Adrenal gland (tissue), 19 donors: ENCODE measurements at regions of chr14 and their contacts with region 1.

Region 1: DNA sequence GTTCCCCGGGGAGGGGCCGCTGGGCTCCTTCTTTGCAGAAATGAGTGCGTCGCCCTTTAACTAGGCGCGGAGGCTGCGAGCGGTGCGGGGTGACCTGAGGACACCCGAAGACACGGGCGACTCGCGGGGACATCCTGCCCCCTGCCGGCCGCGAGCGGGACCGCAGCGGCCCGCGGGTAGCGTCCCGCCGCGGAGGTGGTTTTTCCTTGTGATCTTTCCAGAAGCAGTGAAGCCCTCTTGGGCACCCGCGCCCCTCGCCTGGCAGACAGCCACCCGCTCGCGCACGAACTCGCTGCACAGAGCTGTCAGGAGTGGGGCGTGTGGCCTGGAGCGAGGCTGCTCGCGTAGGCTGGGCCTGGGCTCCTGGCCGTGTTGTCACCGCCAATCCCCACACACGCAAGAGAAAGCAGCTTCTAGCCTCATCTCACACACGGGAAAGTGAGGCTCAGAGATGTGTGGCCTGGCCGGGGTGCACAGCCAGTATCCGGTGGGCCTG is 67.2 kb downstream of the DIO3 start:
- DNase-seq: peak; percentile 66 to 92 (median 80)
- H3K4me3 ChIP-seq: peak overlapping the region in 1 of 4 donors; percentile 11
- H3K27ac ChIP-seq: peak overlapping the region in 1 of 5 donors; percentile 20
- H3K4me1 ChIP-seq: peaks cover 0 to 5% of the 10 kb centered on the region in 2 donors
- H3K27me3 ChIP-seq: no peaks in the 10 kb centered on the region
- CTCF ChIP-seq: peak; percentile 88 to 100 (median 98)
- POLR2A ChIP-seq: no peak

Region 2: DNA sequence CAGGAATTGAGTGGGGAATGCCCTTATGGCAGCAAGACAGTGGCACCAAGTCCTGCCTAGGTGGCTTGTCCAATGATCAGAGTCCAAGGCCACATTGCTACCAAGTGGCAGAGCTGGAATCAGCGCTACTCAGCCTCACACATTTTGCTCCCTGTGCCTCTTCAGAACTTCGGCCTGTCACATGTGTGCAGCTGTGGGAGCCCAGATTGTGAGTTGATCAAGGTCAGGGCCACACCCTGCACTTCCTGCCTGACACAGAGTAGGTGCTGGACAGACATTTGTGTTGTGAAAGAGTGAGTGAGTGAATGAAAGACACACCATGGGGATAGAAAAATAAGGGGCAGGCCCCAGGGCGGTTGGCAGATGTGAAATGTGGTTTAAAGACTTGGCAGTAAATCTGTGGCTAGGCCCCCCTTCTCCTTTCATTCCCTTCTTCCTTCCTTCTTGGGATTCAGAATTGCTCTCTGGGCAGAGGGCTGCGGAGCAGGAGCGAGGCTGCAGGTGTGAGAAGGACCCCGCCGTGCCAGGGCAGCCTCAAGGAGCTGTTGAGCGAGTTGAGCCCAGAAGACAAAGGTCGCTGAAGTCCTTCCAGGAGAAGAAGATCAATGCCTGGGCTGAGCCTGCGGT is 1221.9 kb before region 1 on chr14:
- intact Hi-C with region 1: loop called in 1 of 2 experiments (anchors 10 kb)
- DNase-seq: peak in 4 of 7 donors; percentile 56 to 70 (median 63)
- H3K4me3 ChIP-seq: no peak overlapping the region
- H3K27ac ChIP-seq: peak overlapping the region in 1 of 5 donors; percentile 38
- H3K4me1 ChIP-seq: peaks cover 0 to 21% of the 10 kb centered on the region in 2 donors
- H3K27me3 ChIP-seq: no peaks in the 10 kb centered on the region
- CTCF ChIP-seq: no peak
- POLR2A ChIP-seq: no peak

Region 3: GRCh38 chr14:100654814-100655740 is 973.4 kb before region 1 on chr14:
- intact Hi-C with region 1: loop called in 1 of 2 experiments (anchors 10 kb)
- DNase-seq: peak in 4 of 7 donors; percentile 60 to 69 (median 66)
- H3K4me3 ChIP-seq: no peak overlapping the region
- H3K27ac ChIP-seq: no peak overlapping the region
- H3K4me1 ChIP-seq: peaks cover 2 to 5% of the 10 kb centered on the region in 2 donors
- H3K27me3 ChIP-seq: no peaks in the 10 kb centered on the region
- CTCF ChIP-seq: peak; percentile 54 to 87 (median 66)
- POLR2A ChIP-seq: no peak

Region 4: DNA sequence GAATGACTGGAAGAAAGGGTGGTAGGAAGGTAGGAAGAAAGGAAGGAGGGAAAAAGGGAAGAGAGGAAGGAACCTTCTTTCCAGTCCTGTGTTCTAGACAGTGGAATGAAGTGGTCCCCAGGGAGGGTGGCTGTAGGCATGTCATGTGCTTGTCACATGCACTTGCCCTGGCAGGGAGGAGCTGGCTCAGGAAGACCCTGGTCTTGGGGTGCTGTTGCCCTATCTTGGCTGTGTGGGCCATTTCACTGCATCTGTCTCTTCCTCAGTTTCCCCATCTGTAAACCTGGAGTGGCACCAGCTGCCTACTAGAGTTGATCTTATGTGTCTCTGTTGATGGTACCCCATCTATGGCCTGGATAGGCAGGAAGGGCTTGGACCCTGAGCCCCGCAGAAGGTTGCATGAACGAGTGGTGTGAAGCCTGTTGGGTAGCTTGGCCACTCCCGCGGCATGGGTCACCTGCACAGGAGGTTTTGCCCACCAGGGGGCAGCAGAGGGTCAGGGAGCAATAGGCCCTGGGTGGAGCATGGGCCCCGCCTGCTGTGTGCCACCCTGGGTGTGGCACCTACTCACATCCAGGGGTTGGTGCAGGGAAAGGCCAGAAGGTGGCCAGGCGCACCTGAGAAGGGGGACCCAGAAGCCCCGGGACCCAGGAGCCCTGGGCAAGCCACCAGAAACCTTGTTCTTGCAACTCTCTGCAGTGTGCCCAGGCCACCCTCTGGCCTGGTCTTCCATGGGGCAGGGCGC is 777.5 kb before region 1 on chr14:
- intact Hi-C with region 1: loop called in 1 of 2 experiments (anchors 5 kb)
- DNase-seq: peak; percentile 69 to 91 (median 81)
- H3K4me3 ChIP-seq: no peak overlapping the region
- H3K27ac ChIP-seq: peak overlapping the region in 3 of 5 donors; percentile 29 to 66 (median 48)
- H3K4me1 ChIP-seq: peaks cover 0 to 31% of the 10 kb centered on the region in 2 donors
- H3K27me3 ChIP-seq: no peaks in the 10 kb centered on the region
- CTCF ChIP-seq: peak; percentile 69 to 92 (median 84)
- POLR2A ChIP-seq: no peak

Region 5: DNA sequence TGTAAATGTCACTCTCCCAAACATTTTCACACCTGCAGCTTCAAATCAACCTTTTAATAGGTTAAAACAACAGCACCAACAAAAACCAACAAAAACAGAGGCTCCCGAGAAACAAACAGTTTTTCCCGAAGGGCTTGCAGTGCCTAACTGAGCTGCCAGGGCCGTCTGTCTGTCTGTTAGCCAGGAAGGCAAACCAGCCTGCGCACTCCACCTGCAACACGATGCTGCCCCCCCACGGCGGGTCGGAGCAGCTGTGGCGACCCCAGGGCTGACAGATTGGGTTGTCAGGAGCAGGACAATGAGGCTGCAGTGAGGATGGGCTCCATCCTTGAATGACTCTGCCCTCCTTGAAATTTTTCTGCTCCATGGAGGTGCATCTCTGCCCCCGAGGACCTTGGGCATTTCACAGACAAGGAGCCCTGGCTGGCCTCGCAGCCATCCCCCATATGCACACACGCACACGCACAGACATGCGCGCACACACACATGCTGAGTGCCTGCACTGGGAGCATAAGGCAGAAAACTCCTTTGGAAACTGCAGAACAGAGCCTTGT is 727.6 kb before region 1 on chr14:
- intact Hi-C with region 1: loop called in 1 of 2 experiments (anchors 10 kb)
- DNase-seq: peak; percentile 79 to 91 (median 84)
- H3K4me3 ChIP-seq: peak overlapping the region in 1 of 4 donors; percentile 18
- H3K27ac ChIP-seq: peak overlapping the region; percentile 29 to 79 (median 56)
- H3K4me1 ChIP-seq: peaks cover 29 to 50% of the 10 kb centered on the region in 2 donors
- H3K27me3 ChIP-seq: no peaks in the 10 kb centered on the region
- CTCF ChIP-seq: peak; percentile 20 to 68 (median 52)
- POLR2A ChIP-seq: peak in 1 of 2 donors; percentile 26

Region 6: GRCh38 chr14:101167428-101167827 is 461.1 kb before region 1 on chr14:
- intact Hi-C with region 1: no loop called
- DNase-seq: no peak
- H3K4me3 ChIP-seq: no peak overlapping the region
- H3K27ac ChIP-seq: no peak overlapping the region
- H3K4me1 ChIP-seq: no peaks in the 10 kb centered on the region
- H3K27me3 ChIP-seq: no peaks in the 10 kb centered on the region
- CTCF ChIP-seq: no peak
- POLR2A ChIP-seq: no peak

Region 7: GRCh38 chr14:101235335-101236103 is 393.0 kb before region 1 on chr14:
- intact Hi-C with region 1: loop called in 1 of 2 experiments (anchors 10 kb)
- DNase-seq: peak; percentile 50 to 87 (median 74)
- H3K4me3 ChIP-seq: no peak overlapping the region
- H3K27ac ChIP-seq: no peak overlapping the region
- H3K4me1 ChIP-seq: no peaks in the 10 kb centered on the region
- H3K27me3 ChIP-seq: no peaks in the 10 kb centered on the region
- CTCF ChIP-seq: peak; percentile 63 to 82 (median 72)
- POLR2A ChIP-seq: no peak

Region 8: GRCh38 chr14:101495827-101496775 is 132.4 kb before region 1 on chr14:
- intact Hi-C with region 1: no loop called
- DNase-seq: peak in 2 of 7 donors; percentile 2 to 5
- H3K4me3 ChIP-seq: no peak overlapping the region
- H3K27ac ChIP-seq: no peak overlapping the region
- H3K4me1 ChIP-seq: no peaks in the 10 kb centered on the region
- H3K27me3 ChIP-seq: peaks cover 3% of the 10 kb centered on the region
- CTCF ChIP-seq: no peak
- POLR2A ChIP-seq: no peak

Region 9: DNA sequence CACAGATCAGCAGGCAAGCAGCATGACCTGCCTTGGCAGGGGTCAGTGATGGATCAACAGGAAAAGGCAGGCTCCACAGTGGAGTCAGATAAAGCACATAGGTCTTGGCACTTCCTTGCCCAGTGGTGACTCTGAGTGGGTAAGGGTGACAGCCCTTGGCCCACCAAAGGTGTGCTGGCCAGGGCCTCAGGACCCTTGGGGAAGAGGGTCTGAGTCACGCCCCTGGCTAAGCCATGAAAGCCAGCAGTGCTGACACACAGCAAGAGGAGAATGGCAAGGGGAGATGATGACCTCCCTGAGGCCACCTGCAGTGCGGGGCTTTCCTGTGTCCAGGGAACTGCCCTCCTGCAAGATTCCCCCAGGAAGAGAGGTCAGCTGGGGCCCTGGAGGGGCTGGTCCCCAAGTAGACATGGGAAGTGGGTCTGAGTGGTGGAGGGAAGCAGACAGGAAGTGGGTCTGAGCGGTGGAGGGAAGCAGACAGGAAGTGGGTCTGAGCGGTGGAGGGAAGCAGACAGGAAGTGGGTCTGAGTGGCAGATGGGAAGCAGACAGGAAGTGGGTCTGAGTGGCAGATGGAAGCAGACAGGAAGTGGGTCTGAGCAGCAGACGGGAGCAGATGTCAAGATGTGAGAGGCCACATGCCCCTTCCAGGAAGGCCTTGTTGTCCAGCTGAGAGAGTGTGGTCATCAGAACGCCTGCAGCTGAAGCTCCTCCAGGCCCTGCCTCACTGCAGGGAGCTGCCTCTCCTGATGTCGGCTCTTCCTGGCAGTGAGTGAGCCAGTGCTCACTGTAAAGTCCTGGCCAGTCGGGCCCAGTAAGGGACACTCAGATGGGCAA is 32.4 kb before region 1 on chr14:
- intact Hi-C with region 1: no loop called
- DNase-seq: peak in 2 of 7 donors; percentile 8 to 34
- H3K4me3 ChIP-seq: no peak overlapping the region
- H3K27ac ChIP-seq: no peak overlapping the region
- H3K4me1 ChIP-seq: no peaks in the 10 kb centered on the region
- H3K27me3 ChIP-seq: no peaks in the 10 kb centered on the region
- CTCF ChIP-seq: no peak
- POLR2A ChIP-seq: no peak

Region 10: GRCh38 chr14:101683365-101683764 is 54.8 kb after region 1 on chr14:
- intact Hi-C with region 1: no loop called
- DNase-seq: no peak
- H3K4me3 ChIP-seq: no peak overlapping the region
- H3K27ac ChIP-seq: no peak overlapping the region
- H3K4me1 ChIP-seq: no peaks in the 10 kb centered on the region
- H3K27me3 ChIP-seq: peaks cover 4% of the 10 kb centered on the region
- CTCF ChIP-seq: no peak
- POLR2A ChIP-seq: no peak